HEK293 (cell line): ENCODE measurements at regions of chr5 and their contacts with region 1.

Region 1: GRCh38 chr5:174910245-174910737 is 185.9 kb downstream of the MSX2 start:
- H3K4me3 ChIP-seq: peak overlapping the region; percentile 5; the same call in 1 of the 2 replicates
- H3K27ac ChIP-seq: no peak overlapping the region
- H3K4me1 ChIP-seq: no peaks in the 10 kb centered on the region
- CTCF ChIP-seq: peak; percentile 87

Region 2: GRCh38 chr5:174872271-174872670 is 38.0 kb before region 1 on chr5:
- CTCF ChIA-PET with region 1: no interaction called
- POLR2A ChIA-PET with region 1: no interaction called
- H3K4me3 ChIP-seq: no peak overlapping the region
- H3K27ac ChIP-seq: no peak overlapping the region
- H3K4me1 ChIP-seq: no peaks in the 10 kb centered on the region
- CTCF ChIP-seq: no peak

Region 3: GRCh38 chr5:174920906-174921550 is 10.7 kb after region 1 on chr5:
- CTCF ChIA-PET with region 1: interaction called, 11 read pairs
- POLR2A ChIA-PET with region 1: no interaction called
- H3K4me3 ChIP-seq: no peak overlapping the region
- H3K27ac ChIP-seq: no peak overlapping the region
- H3K4me1 ChIP-seq: no peaks in the 10 kb centered on the region
- CTCF ChIP-seq: no peak

Region 4: GRCh38 chr5:174935854-174936474 is 25.7 kb after region 1 on chr5:
- CTCF ChIA-PET with region 1: interaction called, 29 read pairs
- POLR2A ChIA-PET with region 1: no interaction called
- H3K4me3 ChIP-seq: no peak overlapping the region
- H3K27ac ChIP-seq: no peak overlapping the region
- H3K4me1 ChIP-seq: no peaks in the 10 kb centered on the region
- CTCF ChIP-seq: peak; percentile 80

Region 5: DNA sequence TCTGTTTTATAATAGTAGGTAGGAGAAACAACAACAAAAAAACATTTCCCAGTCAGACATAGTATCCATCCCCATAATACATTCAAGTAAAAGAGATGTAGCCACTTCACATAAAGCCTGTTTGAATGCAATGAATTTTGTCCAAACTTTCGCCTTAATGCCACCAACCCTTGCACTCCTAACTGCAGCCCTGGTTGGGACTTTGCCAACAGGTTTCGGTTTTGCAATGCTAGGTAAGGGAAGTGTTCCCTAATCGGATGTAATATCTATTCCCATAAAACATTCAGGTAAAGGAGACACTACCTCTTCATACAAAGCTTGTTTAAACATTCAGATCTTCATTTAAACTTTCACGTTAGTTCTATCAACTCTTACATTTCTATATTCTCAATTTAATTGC is 197.6 kb after region 1 on chr5:
- CTCF ChIA-PET with region 1: no interaction called
- POLR2A ChIA-PET with region 1: no interaction called
- H3K4me3 ChIP-seq: no peak overlapping the region
- H3K27ac ChIP-seq: no peak overlapping the region
- H3K4me1 ChIP-seq: no peaks in the 10 kb centered on the region
- CTCF ChIP-seq: no peak